Activated CD4-positive, alpha-beta T cell treated with anti-CD3 and anti-CD28 coated beads for 36 hours (primary cell): ENCODE measurements at regions of chr22 and their contacts with region 1.

Region 1: DNA sequence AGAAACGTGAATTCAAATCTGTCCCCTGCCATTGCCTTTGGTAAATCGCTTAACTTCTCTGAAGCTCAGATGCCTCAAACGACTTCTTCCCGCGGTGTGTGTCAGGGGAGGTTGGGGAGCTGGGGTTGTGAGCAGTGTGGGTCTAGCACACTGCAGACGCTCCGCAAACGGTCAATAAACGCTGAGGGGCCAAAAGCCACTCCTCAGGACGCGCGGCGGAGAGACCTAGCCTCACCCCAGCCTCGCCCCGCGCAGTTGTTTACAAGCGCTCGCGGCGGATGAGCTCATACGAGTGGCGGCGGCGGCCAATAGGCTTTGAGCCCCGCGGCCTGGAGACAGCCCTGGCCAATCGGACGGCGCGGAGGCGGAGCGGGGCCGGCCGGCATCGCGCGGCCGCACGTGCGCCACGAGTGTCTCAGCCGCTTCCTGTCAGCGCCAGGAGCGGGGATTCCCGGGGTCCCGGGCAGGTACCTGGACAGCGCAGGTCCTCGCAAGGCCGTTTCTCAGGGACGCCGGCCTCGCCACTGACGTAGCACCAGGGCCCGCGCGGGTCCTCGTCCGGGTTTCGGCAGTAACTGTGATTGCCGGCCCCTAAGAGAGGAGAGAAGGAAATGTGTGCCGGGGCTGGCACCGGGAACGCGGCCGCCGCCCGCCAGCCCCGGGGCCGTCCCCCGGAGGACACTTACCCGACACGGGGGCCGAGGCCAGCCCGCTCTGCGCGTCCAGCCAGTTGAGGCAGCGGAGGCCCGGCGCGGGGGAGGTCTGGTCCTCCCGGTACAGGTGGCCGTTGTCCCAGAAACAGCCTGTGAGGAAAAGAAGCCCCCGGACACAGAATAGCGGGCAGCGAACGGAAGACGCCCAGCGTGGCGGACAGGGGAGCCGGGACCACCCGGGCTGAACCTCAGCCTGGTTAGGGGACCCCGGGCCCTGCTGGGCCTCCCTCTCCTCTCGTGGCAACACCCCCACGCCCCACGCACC is 1.5 kb downstream of the PIK3IP1 start:
- DNase-seq: peak; percentile 97
- ATAC-seq: peak; percentile 78
- H3K4me3 Mint-ChIP-seq: peak overlapping the region; percentile 90
- H3K27ac Mint-ChIP-seq: peak overlapping the region; percentile 97
- H3K4me1 Mint-ChIP-seq: peaks cover 71% of the 10 kb centered on the region
- H3K27me3 Mint-ChIP-seq: no peaks in the 10 kb centered on the region

Region 2: GRCh38 chr22:30968924-30969539 is 321.8 kb before region 1 on chr22 and contains the start of gene TUG1:
- CTCF ChIA-PET with region 1: interaction called, 3 read pairs
- POLR2A ChIA-PET with region 1: interaction called, 7 read pairs
- intact Hi-C with region 1: loop called in 1 of 2 experiments (anchors 2 kb)
- DNase-seq: peak; percentile 99
- ATAC-seq: peak; percentile 93
- H3K4me3 Mint-ChIP-seq: peak within 1 kb of the TSS; percentile 90
- H3K27ac Mint-ChIP-seq: peak within 1 kb of the TSS; percentile 95
- H3K4me1 Mint-ChIP-seq: peaks cover 51% of the 10 kb centered on the region
- H3K27me3 Mint-ChIP-seq: no peaks in the 10 kb centered on the region
- total RNA-seq, gene TUG1: 46.8 to 56.4 TPM

Region 3: GRCh38 chr22:31173386-31174145 is 117.2 kb before region 1 on chr22:
- CTCF ChIA-PET with region 1: no interaction called
- POLR2A ChIA-PET with region 1: interaction called, 10 read pairs
- intact Hi-C with region 1: no loop called
- DNase-seq: peak; percentile 16
- ATAC-seq: peak; percentile 94
- H3K4me3 Mint-ChIP-seq: peak overlapping the region; percentile 29
- H3K27ac Mint-ChIP-seq: peak overlapping the region; percentile 80
- H3K4me1 Mint-ChIP-seq: peaks cover 41% of the 10 kb centered on the region
- H3K27me3 Mint-ChIP-seq: no peaks in the 10 kb centered on the region

Region 4: GRCh38 chr22:31262312-31263080 is 28.3 kb before region 1 on chr22:
- CTCF ChIA-PET with region 1: no interaction called
- POLR2A ChIA-PET with region 1: no interaction called
- intact Hi-C with region 1: no loop called
- DNase-seq: no peak
- ATAC-seq: no peak
- H3K4me3 Mint-ChIP-seq: no peak overlapping the region
- H3K27ac Mint-ChIP-seq: no peak overlapping the region
- H3K4me1 Mint-ChIP-seq: no peaks in the 10 kb centered on the region
- H3K27me3 Mint-ChIP-seq: no peaks in the 10 kb centered on the region

Region 5: DNA sequence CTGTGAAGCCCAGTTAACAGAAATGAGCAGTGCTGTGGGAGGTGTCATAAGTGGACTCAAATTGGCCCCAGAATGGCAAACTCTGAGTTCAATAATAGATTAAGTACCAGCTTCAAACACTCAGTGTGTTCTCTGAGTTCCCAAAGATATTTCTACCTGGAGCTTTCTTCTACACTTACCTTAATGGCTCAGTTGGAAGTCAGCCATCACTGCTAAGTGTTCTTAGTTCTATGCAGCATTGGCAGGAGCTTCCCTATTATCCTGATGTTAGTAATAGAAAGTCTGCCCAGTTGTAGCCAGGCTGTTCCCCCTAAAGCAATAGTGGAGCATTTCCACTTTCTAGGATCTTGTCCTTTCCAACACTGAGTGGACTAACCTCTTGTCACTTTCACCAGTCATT is 11.2 kb after region 1 on chr22:
- CTCF ChIA-PET with region 1: interaction called, 8 read pairs
- POLR2A ChIA-PET with region 1: interaction called, 3 read pairs
- intact Hi-C with region 1: loop called (anchors 2 kb)
- DNase-seq: no peak
- ATAC-seq: no peak
- H3K4me3 Mint-ChIP-seq: no peak overlapping the region
- H3K27ac Mint-ChIP-seq: no peak overlapping the region
- H3K4me1 Mint-ChIP-seq: peaks cover 34% of the 10 kb centered on the region
- H3K27me3 Mint-ChIP-seq: no peaks in the 10 kb centered on the region

Region 6: DNA sequence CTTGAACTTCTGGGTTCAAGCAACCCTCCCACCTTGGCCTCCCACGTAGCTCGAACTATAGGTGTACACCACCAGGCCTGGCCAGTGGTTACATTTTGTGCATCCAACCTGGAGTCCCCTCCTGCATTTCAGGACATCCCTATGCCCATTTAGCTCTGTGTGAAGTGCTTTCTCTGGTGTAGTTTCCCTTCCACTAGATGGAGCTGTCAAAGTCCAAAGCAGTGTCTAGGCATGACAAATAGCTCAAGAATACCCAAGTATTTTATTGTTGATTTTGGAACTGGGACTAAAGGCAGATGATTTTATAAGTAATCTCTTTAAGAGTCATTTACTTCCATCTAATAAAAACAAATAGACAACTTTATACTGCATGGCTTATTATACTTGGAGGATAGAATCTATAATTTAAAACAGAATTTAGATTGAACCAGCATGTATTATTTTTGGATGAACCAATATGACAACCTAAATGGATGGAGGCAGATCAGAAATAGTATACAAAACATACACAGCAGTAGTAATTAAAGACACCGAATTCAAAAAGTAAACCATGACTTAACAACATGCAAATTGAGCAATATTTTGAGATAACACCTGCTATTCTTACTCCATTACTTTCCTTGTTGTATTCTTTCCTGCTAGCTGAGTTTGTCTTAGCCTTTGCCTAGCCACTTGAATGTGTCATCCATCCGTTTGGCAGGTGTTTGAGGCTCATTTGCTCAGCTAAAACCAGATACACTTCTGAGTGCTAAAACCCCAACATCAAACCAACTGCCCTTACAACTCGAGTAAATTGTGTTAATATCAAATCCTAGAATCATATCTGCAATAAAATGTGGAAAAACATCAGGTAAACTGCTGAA is 161.2 kb after region 1 on chr22:
- CTCF ChIA-PET with region 1: no interaction called
- POLR2A ChIA-PET with region 1: no interaction called
- intact Hi-C with region 1: no loop called
- DNase-seq: no peak
- ATAC-seq: peak; percentile 83
- H3K4me3 Mint-ChIP-seq: no peak overlapping the region
- H3K27ac Mint-ChIP-seq: peak overlapping the region; percentile 65
- H3K4me1 Mint-ChIP-seq: no peaks in the 10 kb centered on the region
- H3K27me3 Mint-ChIP-seq: no peaks in the 10 kb centered on the region

Region 7: DNA sequence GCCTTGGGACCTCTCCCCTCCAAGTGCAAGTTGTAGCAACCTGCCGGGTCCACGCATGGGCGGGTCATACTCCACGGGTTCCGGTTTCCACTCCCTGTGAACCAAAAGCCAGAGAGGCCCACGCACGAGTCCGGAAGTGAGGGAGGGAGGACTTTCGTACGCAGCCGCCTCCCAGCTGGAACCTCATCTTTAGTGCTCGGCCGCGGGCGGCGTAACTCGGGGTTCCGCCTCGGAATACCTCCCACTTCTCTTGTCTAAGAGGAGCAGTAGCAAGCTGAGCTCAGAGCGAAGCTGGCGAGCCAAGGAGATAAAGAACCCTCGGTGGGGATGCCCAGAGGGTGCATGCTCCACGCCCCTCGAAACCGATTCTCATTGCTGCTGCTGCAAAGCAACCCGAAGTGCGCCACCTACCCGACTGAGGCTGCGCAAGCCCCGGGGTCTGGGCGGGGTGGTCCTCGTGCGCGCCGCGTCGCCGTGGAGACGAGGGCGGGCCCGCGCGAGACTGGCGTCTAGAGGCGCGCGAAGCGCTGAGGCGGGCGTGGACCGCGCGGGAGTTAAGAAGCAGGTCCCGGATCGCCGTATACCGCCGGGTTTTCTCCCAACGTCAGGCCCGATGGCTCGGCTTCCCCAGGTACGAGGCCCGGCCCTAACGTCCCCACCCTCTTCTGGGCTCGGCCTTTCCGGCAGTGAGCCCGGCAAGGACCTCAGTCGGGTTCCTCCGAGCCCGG is 205.4 kb after region 1 on chr22 and contains the start of gene SFI1:
- CTCF ChIA-PET with region 1: interaction called, 3 read pairs
- POLR2A ChIA-PET with region 1: no interaction called
- intact Hi-C with region 1: loop called in 1 of 2 experiments (anchors 1 kb)
- DNase-seq: peak; percentile 97
- ATAC-seq: peak; percentile 87
- H3K4me3 Mint-ChIP-seq: peak within 1 kb of the TSS; percentile 85
- H3K27ac Mint-ChIP-seq: peak within 1 kb of the TSS; percentile 93
- H3K4me1 Mint-ChIP-seq: peaks cover 55% of the 10 kb centered on the region
- H3K27me3 Mint-ChIP-seq: no peaks in the 10 kb centered on the region
- total RNA-seq, gene SFI1: 221 to 234 TPM

Region 8: DNA sequence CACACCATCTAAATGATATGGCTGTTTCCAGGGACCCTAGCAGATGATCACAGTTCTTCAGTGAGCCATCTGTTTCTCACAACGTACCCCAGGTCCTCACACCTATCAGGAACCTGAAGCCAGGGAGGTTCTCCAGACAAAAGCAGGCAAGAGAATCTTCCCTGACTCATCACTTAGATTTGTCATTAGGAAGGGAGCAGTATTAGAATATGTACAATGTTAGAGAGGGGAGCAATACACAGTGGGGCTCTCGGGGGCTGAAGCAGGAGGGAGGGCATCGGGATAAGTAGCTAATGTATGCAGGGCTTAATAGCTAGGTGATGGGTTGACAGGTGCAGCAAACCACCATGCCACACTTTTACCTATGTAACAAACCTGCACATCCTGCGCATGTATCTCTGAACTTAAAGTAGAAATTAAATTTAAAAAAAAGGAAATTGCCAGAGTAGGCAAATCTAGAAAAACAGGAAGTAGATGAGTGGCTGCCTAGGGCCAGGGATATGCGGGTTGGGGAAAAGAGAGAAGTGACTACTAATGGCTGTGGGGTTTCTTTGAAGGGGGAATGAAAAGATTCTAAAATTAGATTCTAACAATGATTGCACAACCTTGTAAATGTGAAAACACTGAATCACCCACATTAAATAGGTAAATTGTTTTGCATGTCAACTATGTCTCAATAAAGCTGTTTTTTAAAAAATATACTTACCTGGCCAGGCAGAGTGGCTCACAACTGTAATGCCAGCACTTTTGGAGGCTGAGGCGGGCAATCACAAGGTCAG is 853.9 kb after region 1 on chr22:
- CTCF ChIA-PET with region 1: no interaction called
- POLR2A ChIA-PET with region 1: no interaction called
- intact Hi-C with region 1: loop called in 1 of 2 experiments (anchors 5 kb)
- DNase-seq: no peak
- ATAC-seq: peak; percentile 7
- H3K4me3 Mint-ChIP-seq: no peak overlapping the region
- H3K27ac Mint-ChIP-seq: no peak overlapping the region
- H3K4me1 Mint-ChIP-seq: peaks cover 38% of the 10 kb centered on the region
- H3K27me3 Mint-ChIP-seq: no peaks in the 10 kb centered on the region